ENCODE measurements at regions of chrX and their contacts with region 1.

Region 1: GRCh38 chrX:135521405-135522189 is 1.1 kb downstream of the INTS6L start:
- DNase-seq: peak; percentile 45 to 90 (median 83)
- ATAC-seq: peak; percentile 83
- H3K4me3 ChIP-seq: peak overlapping the region; percentile 62
- H3K4me3 Mint-ChIP-seq: peak overlapping the region; percentile 92 to 100 (median 98)
- H3K27ac ChIP-seq: peak overlapping the region; percentile 90
- H3K27ac Mint-ChIP-seq: peak overlapping the region; percentile 95 to 100 (median 97)
- H3K4me1 ChIP-seq: peaks cover 5 to 12% of the 10 kb centered on the region in 2 donors
- H3K4me1 Mint-ChIP-seq: peaks cover 8 to 49% (median 41%) of the 10 kb centered on the region in 7 donors
- H3K27me3 ChIP-seq: no peaks in the 10 kb centered on the region
- H3K27me3 Mint-ChIP-seq: peaks cover 0 to 3% (median 0%) of the 10 kb centered on the region in 5 donors

Region 2: GRCh38 chrX:135003876-135004623 is 517.5 kb before region 1 on chrX:
- CTCF ChIA-PET with region 1: no interaction called
- POLR2A ChIA-PET with region 1: no interaction called
- intact Hi-C with region 1: loop called (anchors 1 kb)
- DNase-seq: peak; percentile 78 to 90 (median 87)
- ATAC-seq: peak; percentile 100
- H3K4me3 ChIP-seq: peak overlapping the region; percentile 59
- H3K4me3 Mint-ChIP-seq: peak overlapping the region; percentile 83 to 94 (median 88)
- H3K27ac ChIP-seq: peak overlapping the region; percentile 46
- H3K27ac Mint-ChIP-seq: peak overlapping the region; percentile 10 to 89 (median 76)
- H3K4me1 ChIP-seq: no peaks in the 10 kb centered on the region
- H3K4me1 Mint-ChIP-seq: peaks cover 0 to 19% (median 10%) of the 10 kb centered on the region in 7 donors
- H3K27me3 ChIP-seq: no peaks in the 10 kb centered on the region
- H3K27me3 Mint-ChIP-seq: peaks cover 0 to 15% (median 0%) of the 10 kb centered on the region in 5 donors

Region 3: GRCh38 chrX:135421537-135421931 is 100.1 kb before region 1 on chrX:
- CTCF ChIA-PET with region 1: no interaction called
- POLR2A ChIA-PET with region 1: interaction called, 3 read pairs
- intact Hi-C with region 1: loop called (anchors 1 to 2 kb)
- DNase-seq: peak; percentile 75 to 89 (median 83)
- ATAC-seq: peak; percentile 96
- H3K4me3 ChIP-seq: peak overlapping the region; percentile 37
- H3K4me3 Mint-ChIP-seq: peak overlapping the region; percentile 53 to 84 (median 72)
- H3K27ac ChIP-seq: no peak overlapping the region
- H3K27ac Mint-ChIP-seq: peak overlapping the region in 4 of 9 donors; percentile 12 to 68 (median 26)
- H3K4me1 ChIP-seq: no peaks in the 10 kb centered on the region
- H3K4me1 Mint-ChIP-seq: peaks cover 0 to 13% (median 6%) of the 10 kb centered on the region in 7 donors
- H3K27me3 ChIP-seq: no peaks in the 10 kb centered on the region
- H3K27me3 Mint-ChIP-seq: peaks cover 0 to 22% (median 0%) of the 10 kb centered on the region in 5 donors

Region 4: DNA sequence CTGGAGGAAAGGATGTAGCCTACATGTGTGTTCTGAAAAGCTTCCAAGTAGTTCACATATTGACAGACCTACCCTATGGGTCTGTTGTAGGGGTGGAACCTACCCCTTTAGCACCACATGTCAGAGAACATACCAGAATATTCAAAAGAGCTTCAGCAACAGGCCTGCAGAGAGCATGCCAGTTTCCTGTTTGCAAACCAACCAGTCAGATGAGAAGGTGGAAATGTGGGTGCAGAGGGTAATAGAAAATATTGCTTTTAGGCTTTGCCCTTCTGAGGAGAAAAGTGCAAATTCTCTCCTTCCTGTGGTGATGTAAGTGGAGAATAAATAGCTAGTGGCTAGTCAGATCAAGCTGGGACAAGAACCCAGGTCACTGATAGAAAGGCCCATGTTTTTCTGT is 15.3 kb after region 1 on chrX:
- CTCF ChIA-PET with region 1: interaction called, 3 read pairs
- POLR2A ChIA-PET with region 1: interaction called, 15 read pairs
- intact Hi-C with region 1: loop called in 1 of 2 experiments (anchors 1 kb)
- DNase-seq: peak in 5 of 9 donors; percentile 16 to 35 (median 27)
- ATAC-seq: peak; percentile 65
- H3K4me3 ChIP-seq: no peak overlapping the region
- H3K4me3 Mint-ChIP-seq: peak overlapping the region in 9 of 10 donors; percentile 33 to 65 (median 60)
- H3K27ac ChIP-seq: peak overlapping the region; percentile 57
- H3K27ac Mint-ChIP-seq: peak overlapping the region; percentile 17 to 83 (median 69)
- H3K4me1 ChIP-seq: peaks cover 2 to 28% of the 10 kb centered on the region in 2 donors
- H3K4me1 Mint-ChIP-seq: peaks cover 21 to 85% (median 73%) of the 10 kb centered on the region in 7 donors
- H3K27me3 ChIP-seq: no peaks in the 10 kb centered on the region
- H3K27me3 Mint-ChIP-seq: no peaks in the 10 kb centered on the region

Region 5: DNA sequence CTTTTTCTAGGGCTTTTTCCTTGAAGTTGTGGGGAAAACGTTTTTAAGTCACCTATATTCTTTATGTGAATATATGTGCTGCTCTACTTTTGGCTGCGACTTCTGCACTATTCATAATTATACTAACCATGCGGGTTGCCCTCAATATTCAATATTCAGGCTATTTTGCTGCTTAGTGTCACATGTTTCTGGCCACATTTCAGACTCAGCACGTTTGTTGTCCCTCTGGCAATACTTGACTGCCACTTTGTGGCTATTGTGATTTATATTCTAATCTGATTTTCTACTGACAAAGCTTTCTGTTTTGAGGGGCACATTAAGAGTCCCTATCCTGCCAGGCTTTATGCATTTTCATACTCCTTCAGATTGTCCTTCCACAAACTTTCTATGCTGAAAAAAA is 128.0 kb after region 1 on chrX:
- CTCF ChIA-PET with region 1: no interaction called
- POLR2A ChIA-PET with region 1: no interaction called
- intact Hi-C with region 1: no loop called
- DNase-seq: no peak
- ATAC-seq: no peak
- H3K4me3 ChIP-seq: no peak overlapping the region
- H3K4me3 Mint-ChIP-seq: no peak overlapping the region
- H3K27ac ChIP-seq: no peak overlapping the region
- H3K27ac Mint-ChIP-seq: no peak overlapping the region
- H3K4me1 ChIP-seq: no peaks in the 10 kb centered on the region
- H3K4me1 Mint-ChIP-seq: peaks cover 0 to 5% (median 0%) of the 10 kb centered on the region in 7 donors
- H3K27me3 ChIP-seq: no peaks in the 10 kb centered on the region
- H3K27me3 Mint-ChIP-seq: peaks cover 0 to 9% (median 0%) of the 10 kb centered on the region in 5 donors

Region 6: GRCh38 chrX:135973548-135974278 is 452.1 kb after region 1 on chrX and contains the start of gene MMGT1:
- CTCF ChIA-PET with region 1: no interaction called
- POLR2A ChIA-PET with region 1: no interaction called
- intact Hi-C with region 1: loop called (anchors 1 kb)
- DNase-seq: peak; percentile 51 to 82 (median 77)
- ATAC-seq: peak; percentile 91
- H3K4me3 ChIP-seq: peak within 1 kb of the TSS; percentile 91
- H3K4me3 Mint-ChIP-seq: peak within 1 kb of the TSS; percentile 90 to 99 (median 98)
- H3K27ac ChIP-seq: peak within 1 kb of the TSS; percentile 83
- H3K27ac Mint-ChIP-seq: peak within 1 kb of the TSS; percentile 92 to 99 (median 97)
- H3K4me1 ChIP-seq: peaks cover 13 to 17% of the 10 kb centered on the region in 2 donors
- H3K4me1 Mint-ChIP-seq: peaks cover 10 to 37% (median 28%) of the 10 kb centered on the region in 7 donors
- H3K27me3 ChIP-seq: no peaks in the 10 kb centered on the region
- H3K27me3 Mint-ChIP-seq: no peaks in the 10 kb centered on the region
- total RNA-seq, gene MMGT1: 22.0 to 28.4 (median 24.0) TPM

Region 7: GRCh38 chrX:136251041-136251991 is 729.7 kb after region 1 on chrX and contains the start of gene MAP7D3:
- CTCF ChIA-PET with region 1: no interaction called
- POLR2A ChIA-PET with region 1: no interaction called
- intact Hi-C with region 1: loop called in 1 of 2 experiments (anchors 2 kb)
- DNase-seq: peak; percentile 54 to 74 (median 66)
- ATAC-seq: peak; percentile 96
- H3K4me3 ChIP-seq: peak within 1 kb of the TSS; percentile 58
- H3K4me3 Mint-ChIP-seq: peak within 1 kb of the TSS; percentile 84 to 98 (median 91)
- H3K27ac ChIP-seq: peak within 1 kb of the TSS; percentile 67
- H3K27ac Mint-ChIP-seq: peak within 1 kb of the TSS; percentile 82 to 97 (median 89)
- H3K4me1 ChIP-seq: no peaks in the 10 kb centered on the region
- H3K4me1 Mint-ChIP-seq: peaks cover 0 to 15% (median 8%) of the 10 kb centered on the region in 7 donors
- H3K27me3 ChIP-seq: no peaks in the 10 kb centered on the region
- H3K27me3 Mint-ChIP-seq: no peaks in the 10 kb centered on the region
- total RNA-seq, gene MAP7D3: 5.9 to 15.8 (median 7.7) TPM

Region 8: DNA sequence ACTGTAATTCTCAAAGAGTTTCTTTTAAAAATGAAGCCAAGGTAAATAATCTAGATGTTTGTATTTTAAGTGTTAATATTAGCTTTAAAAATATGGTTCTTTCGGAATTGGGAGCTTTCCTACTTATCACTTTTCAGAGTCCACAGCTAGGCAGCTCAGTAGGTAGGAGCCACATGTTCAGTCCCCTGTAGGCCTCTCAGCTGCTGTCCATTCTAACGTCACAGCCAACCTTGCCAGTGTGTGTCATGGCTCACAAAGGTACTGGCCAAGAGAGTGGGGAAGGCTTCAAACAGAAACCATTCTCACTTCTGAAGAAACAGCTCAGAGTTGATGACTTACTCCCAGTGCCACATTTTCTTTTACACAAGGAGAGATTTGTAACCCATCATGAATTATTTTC is 916.2 kb after region 1 on chrX:
- CTCF ChIA-PET with region 1: no interaction called
- POLR2A ChIA-PET with region 1: no interaction called
- intact Hi-C with region 1: no loop called
- DNase-seq: no peak
- ATAC-seq: no peak
- H3K4me3 ChIP-seq: no peak overlapping the region
- H3K4me3 Mint-ChIP-seq: no peak overlapping the region
- H3K27ac ChIP-seq: no peak overlapping the region
- H3K27ac Mint-ChIP-seq: no peak overlapping the region
- H3K4me1 ChIP-seq: no peaks in the 10 kb centered on the region
- H3K4me1 Mint-ChIP-seq: peaks cover 0 to 3% (median 0%) of the 10 kb centered on the region in 7 donors
- H3K27me3 ChIP-seq: no peaks in the 10 kb centered on the region
- H3K27me3 Mint-ChIP-seq: peaks cover 0 to 2% (median 0%) of the 10 kb centered on the region in 5 donors

Region 9: GRCh38 chrX:136754651-136755050 is 1233.1 kb after region 1 on chrX:
- CTCF ChIA-PET with region 1: no interaction called
- POLR2A ChIA-PET with region 1: no interaction called
- intact Hi-C with region 1: no loop called
- DNase-seq: peak in 6 of 9 donors; percentile 19 to 46 (median 36)
- ATAC-seq: peak; percentile 69
- H3K4me3 ChIP-seq: no peak overlapping the region
- H3K4me3 Mint-ChIP-seq: peak overlapping the region in 3 of 10 donors; percentile 18 to 56 (median 39)
- H3K27ac ChIP-seq: no peak overlapping the region
- H3K27ac Mint-ChIP-seq: peak overlapping the region in 5 of 9 donors; percentile 11 to 64 (median 48)
- H3K4me1 ChIP-seq: peaks cover 6 to 33% of the 10 kb centered on the region in 2 donors
- H3K4me1 Mint-ChIP-seq: peaks cover 21 to 88% (median 77%) of the 10 kb centered on the region in 7 donors
- H3K27me3 ChIP-seq: no peaks in the 10 kb centered on the region
- H3K27me3 Mint-ChIP-seq: no peaks in the 10 kb centered on the region

Region 10: GRCh38 chrX:136880452-136881013 is 1358.9 kb after region 1 on chrX and contains the start of gene RBMX:
- CTCF ChIA-PET with region 1: no interaction called
- POLR2A ChIA-PET with region 1: no interaction called
- intact Hi-C with region 1: loop called in 1 of 2 experiments (anchors 2 kb)
- DNase-seq: peak; percentile 75 to 92 (median 89)
- ATAC-seq: peak; percentile 94
- H3K4me3 ChIP-seq: peak within 1 kb of the TSS; percentile 87
- H3K4me3 Mint-ChIP-seq: peak within 1 kb of the TSS; percentile 91 to 99 (median 97)
- H3K27ac ChIP-seq: peak within 1 kb of the TSS; percentile 95
- H3K27ac Mint-ChIP-seq: peak within 1 kb of the TSS; percentile 96 to 100 (median 99)
- H3K4me1 ChIP-seq: peaks cover 4 to 9% of the 10 kb centered on the region in 2 donors
- H3K4me1 Mint-ChIP-seq: peaks cover 0 to 33% (median 25%) of the 10 kb centered on the region in 7 donors
- H3K27me3 ChIP-seq: no peaks in the 10 kb centered on the region
- H3K27me3 Mint-ChIP-seq: no peaks in the 10 kb centered on the region
- total RNA-seq, gene RBMX: 204 to 263 (median 259) TPM